ENCODE measurements at regions of chr16 and their contacts with region 1.

Region 1: DNA sequence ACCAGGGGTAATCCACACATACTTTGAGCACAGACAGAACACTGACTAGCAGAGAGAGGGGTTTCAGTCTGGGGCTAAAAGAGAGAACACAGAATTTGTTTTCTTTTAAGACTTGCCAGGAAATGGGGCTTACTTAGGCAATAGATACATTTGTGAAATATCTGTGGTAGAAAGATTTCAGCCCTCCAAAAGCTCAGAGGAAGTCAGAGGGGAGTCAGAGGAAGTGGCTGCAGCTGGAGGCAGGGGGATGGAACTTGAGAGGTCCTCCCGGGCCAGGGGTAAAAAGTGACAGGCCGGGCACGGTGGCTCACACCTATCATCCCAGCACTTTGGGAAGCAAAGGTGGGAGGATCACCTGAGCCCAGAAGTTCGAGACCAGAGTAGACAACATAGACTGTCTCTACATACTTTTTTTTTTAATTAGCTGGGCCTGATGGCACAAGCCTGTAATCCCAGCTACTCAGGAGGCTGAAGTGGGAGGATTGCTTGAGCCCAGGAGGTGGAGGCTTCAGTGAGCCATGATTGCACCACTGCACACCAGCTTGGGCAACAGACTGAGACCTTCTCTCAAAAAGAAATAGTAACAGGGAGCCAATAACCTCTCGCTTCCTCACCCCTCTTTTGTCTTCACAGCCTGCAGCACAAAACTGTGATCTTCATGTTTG is 49.9 kb downstream of the NLRC5 start:
- DNase-seq: no peak
- H3K4me3 ChIP-seq: no peak overlapping the region
- H3K27ac ChIP-seq: peak overlapping the region in 10 of 59 donors; percentile 4 to 36 (median 20)
- H3K27me3 ChIP-seq: no peaks in the 10 kb centered on the region
- CTCF ChIP-seq: no peak

Region 2: GRCh38 chr16:56814537-56815432 is 224.5 kb before region 1 on chr16:
- intact Hi-C with region 1: no loop called
- DNase-seq: no peak
- H3K4me3 ChIP-seq: no peak overlapping the region
- H3K27ac ChIP-seq: peak overlapping the region in 5 of 59 donors; percentile 7 to 46 (median 15)
- H3K27me3 ChIP-seq: no peaks in the 10 kb centered on the region
- CTCF ChIP-seq: no peak

Region 3: DNA sequence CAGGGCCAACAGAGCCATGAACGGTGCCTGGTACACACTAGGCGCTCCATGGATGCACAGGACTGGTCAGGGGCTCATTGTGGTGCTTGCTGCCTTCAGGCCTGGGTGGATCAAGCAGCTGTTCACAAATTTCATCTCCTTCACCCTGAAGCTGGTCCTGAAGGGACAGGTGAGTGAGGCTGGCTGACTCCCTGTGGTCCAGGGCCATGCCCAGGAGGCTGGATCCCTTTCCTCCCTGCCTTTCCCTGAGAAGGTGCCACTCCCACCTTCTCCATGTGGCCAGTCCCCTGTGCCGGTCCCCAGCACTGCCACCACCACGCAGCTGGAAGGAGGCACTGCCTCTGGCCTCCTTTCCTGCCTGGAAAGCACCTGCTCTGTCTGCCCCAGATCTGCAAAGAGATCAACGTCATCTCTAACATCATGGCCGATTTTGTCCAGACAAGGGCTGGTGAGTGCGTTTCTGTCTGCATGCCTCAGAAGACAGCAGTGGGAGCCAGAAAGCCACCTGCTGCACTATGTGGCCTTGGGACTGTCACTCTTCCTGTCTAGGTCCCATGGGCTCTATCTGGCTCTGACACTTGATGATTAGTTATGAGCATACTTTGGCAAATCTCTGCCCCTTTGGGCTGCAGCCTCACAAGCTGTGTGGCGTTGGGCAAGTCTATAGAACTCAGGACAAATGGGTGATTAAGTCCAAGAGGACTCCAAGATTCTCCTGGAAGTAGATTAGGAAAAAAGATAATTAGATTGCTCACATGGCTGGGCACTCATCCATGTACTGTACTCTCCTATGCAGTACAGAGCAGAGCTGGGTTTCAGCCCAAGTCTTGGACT is 68.1 kb before region 1 on chr16:
- intact Hi-C with region 1: loop called in 1 of 2 experiments (anchors 5 kb)
- DNase-seq: no peak
- H3K4me3 ChIP-seq: no peak overlapping the region
- H3K27ac ChIP-seq: no peak overlapping the region
- H3K27me3 ChIP-seq: no peaks in the 10 kb centered on the region
- CTCF ChIP-seq: no peak